SK-N-SH (cell line): ENCODE measurements at regions of chrX and their contacts with region 1.

Region 1: DNA sequence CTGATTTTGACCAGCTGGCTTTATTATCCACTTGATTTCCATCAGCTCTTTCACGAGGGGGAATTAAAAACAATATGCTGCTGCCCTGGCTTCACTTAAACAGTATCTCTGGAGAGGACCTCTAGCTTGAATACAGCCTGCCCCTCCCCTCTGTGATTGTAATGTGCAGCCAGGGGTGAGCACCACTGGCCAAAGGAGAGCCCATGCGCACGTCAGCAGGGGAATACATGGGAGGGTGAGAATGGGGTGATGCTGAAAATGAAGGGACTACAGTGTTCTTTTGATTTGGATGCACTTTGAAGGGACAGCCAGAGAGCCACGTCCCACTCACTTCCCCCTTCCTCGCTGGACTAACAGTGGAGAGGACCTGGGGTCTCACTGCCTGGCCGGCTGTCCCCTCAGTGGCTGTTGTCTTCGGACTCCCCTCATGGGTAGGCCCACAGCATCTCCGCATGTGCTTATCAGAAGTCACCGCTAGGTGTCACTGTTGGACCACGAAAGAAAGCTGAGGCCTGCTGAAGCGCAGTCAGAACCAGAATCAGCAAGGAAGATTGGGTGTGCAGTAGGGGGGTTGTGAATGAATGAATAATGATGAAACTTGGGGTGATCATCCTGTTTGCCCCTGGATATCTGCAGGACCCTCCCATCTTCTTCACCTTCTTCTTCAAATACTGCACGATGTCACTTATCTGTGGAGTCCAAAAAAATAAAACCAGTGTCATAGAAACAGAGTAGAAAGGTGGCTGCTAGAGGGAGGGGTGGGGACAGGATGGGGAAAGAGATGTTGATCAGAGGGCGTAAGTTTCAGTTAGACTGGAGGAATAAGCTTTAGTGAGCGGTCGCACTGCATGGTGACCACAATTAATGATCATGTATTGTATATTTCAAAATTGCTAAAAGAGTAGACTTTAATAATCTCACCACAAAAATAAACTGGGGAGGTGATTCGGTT is 32.8 kb downstream of the CLCN4 start:
- DNase-seq: peak; percentile 72
- H3K4me3 ChIP-seq: no peak overlapping the region
- H3K27ac ChIP-seq: no peak overlapping the region
- H3K4me1 ChIP-seq: no peaks in the 10 kb centered on the region; a peak in 1 of 4 replicates
- H3K27me3 ChIP-seq: peaks cover 21% of the 10 kb centered on the region; the same call in 1 of the 2 replicates
- CTCF ChIP-seq: peak; percentile 82
- EP300 ChIP-seq: no peak
- RAD21 ChIP-seq: peak; percentile 94

Region 2: DNA sequence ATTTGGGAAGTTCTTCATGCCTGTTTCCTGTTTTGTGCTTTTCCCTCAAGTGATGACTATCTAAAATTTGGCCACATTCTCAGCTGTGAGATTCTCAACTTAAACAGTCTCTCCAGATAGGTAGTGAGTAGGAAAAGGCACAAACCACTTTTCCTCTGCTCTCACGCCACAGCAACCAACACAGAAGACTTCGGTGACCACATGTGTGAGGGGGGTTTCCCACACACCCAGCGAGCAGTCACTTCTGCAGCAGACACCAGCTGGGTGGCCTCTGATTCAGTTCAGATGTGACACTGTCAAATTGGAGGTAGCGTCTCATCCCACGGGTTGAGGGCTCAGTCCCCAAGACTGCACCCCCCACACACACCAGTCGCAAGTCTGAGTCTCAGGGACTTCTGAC is 247.5 kb before region 1 on chrX:
- CTCF ChIA-PET with region 1: no interaction called
- POLR2A ChIA-PET with region 1: no interaction called
- DNase-seq: no peak
- H3K4me3 ChIP-seq: no peak overlapping the region
- H3K27ac ChIP-seq: no peak overlapping the region
- H3K4me1 ChIP-seq: no peaks in the 10 kb centered on the region
- H3K27me3 ChIP-seq: no peaks in the 10 kb centered on the region
- CTCF ChIP-seq: no peak
- EP300 ChIP-seq: no peak
- RAD21 ChIP-seq: no peak

Region 3: GRCh38 chrX:9980927-9981326 is 208.7 kb before region 1 on chrX:
- CTCF ChIA-PET with region 1: no interaction called
- POLR2A ChIA-PET with region 1: no interaction called
- DNase-seq: no peak
- H3K4me3 ChIP-seq: no peak overlapping the region
- H3K27ac ChIP-seq: no peak overlapping the region
- H3K4me1 ChIP-seq: no peaks in the 10 kb centered on the region
- H3K27me3 ChIP-seq: no peaks in the 10 kb centered on the region; the same call in 1 of the 2 replicates
- CTCF ChIP-seq: no peak
- EP300 ChIP-seq: no peak
- RAD21 ChIP-seq: no peak

Region 4: GRCh38 chrX:10039821-10040793 is 149.5 kb before region 1 on chrX:
- CTCF ChIA-PET with region 1: no interaction called
- POLR2A ChIA-PET with region 1: no interaction called
- DNase-seq: no peak
- H3K4me3 ChIP-seq: no peak overlapping the region
- H3K27ac ChIP-seq: no peak overlapping the region
- H3K4me1 ChIP-seq: no peaks in the 10 kb centered on the region
- H3K27me3 ChIP-seq: no peaks in the 10 kb centered on the region
- CTCF ChIP-seq: no peak
- EP300 ChIP-seq: no peak
- RAD21 ChIP-seq: no peak

Region 5: GRCh38 chrX:10158279-10159144 is 31.1 kb before region 1 on chrX:
- CTCF ChIA-PET with region 1: interaction called, 10 read pairs
- POLR2A ChIA-PET with region 1: no interaction called
- DNase-seq: peak; percentile 84
- H3K4me3 ChIP-seq: peak overlapping the region; percentile 51 to 57
- H3K27ac ChIP-seq: no peak overlapping the region
- H3K4me1 ChIP-seq: no peaks in the 10 kb centered on the region; a peak in 1 of 4 replicates
- H3K27me3 ChIP-seq: peaks cover 15% of the 10 kb centered on the region; the same call in 1 of the 2 replicates
- CTCF ChIP-seq: no peak
- EP300 ChIP-seq: no peak
- RAD21 ChIP-seq: no peak

Region 6: GRCh38 chrX:10206317-10206716 is 16.7 kb after region 1 on chrX:
- CTCF ChIA-PET with region 1: interaction called, 40 read pairs
- POLR2A ChIA-PET with region 1: no interaction called
- DNase-seq: no peak
- H3K4me3 ChIP-seq: no peak overlapping the region
- H3K27ac ChIP-seq: no peak overlapping the region
- H3K4me1 ChIP-seq: no peaks in the 10 kb centered on the region
- H3K27me3 ChIP-seq: no peaks in the 10 kb centered on the region; the same call in 1 of the 2 replicates
- CTCF ChIP-seq: no peak
- EP300 ChIP-seq: no peak
- RAD21 ChIP-seq: no peak

Region 7: DNA sequence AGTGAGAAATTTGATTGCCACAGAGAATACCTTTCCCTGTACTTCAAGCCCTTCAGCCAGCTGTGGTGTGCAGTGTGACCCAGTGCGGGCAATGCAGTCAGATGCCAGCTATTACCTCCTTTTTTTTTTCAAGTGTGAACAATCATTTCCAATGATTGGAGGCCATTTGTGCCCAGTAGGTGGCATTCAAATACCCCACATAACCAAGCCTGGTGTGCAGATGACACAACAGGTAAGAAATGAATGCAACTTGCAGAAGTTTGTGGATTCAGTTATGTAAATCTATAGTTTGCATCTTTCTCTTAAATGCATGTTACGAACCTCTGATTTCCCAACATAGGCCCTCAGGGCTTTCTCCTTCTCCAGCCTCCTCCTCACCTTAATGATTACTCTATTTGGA is 65.1 kb after region 1 on chrX:
- CTCF ChIA-PET with region 1: interaction called, 30 read pairs
- POLR2A ChIA-PET with region 1: no interaction called
- DNase-seq: peak; percentile 8
- H3K4me3 ChIP-seq: no peak overlapping the region
- H3K27ac ChIP-seq: no peak overlapping the region
- H3K4me1 ChIP-seq: no peaks in the 10 kb centered on the region
- H3K27me3 ChIP-seq: no peaks in the 10 kb centered on the region
- CTCF ChIP-seq: peak; percentile 30
- EP300 ChIP-seq: no peak
- RAD21 ChIP-seq: peak; percentile 69

Region 8: DNA sequence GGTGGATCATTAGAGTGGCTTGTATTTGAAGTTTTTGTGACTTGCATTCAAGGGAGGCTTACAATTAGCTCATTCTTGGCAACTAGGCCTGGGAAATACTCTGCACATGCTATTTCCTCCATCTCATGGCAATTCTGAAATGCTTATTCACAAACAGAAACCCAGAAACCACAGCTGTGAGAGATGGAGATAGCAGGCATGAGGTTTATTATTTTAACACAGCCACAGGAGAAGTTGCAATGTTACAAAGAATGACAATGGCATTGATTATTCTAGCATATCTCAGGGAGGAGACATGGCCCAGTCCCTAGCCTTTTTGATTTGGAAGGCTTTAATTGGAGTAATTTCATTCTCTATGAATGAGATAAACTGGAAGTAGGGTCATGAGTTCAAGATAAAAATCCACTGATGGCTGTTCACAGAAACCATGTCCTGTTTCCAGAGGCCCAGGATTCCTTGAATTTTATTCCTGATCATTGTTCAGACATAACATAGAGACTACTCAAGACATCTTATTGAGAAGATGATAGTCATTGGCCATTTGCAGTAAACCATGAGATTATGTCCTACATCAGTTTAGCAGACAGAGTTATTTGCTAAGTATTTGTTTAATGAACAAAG is 306.9 kb after region 1 on chrX:
- CTCF ChIA-PET with region 1: no interaction called
- POLR2A ChIA-PET with region 1: no interaction called
- DNase-seq: peak; percentile 46
- H3K4me3 ChIP-seq: no peak overlapping the region
- H3K27ac ChIP-seq: peak overlapping the region; percentile 76
- H3K4me1 ChIP-seq: no peaks in the 10 kb centered on the region; a peak in 2 of 4 replicates
- H3K27me3 ChIP-seq: no peaks in the 10 kb centered on the region
- CTCF ChIP-seq: no peak
- EP300 ChIP-seq: peak; percentile 32 to 81; a peak in 3 of 4 replicates
- RAD21 ChIP-seq: peak; percentile 8; the same call in 1 of the 2 replicates

Region 9: DNA sequence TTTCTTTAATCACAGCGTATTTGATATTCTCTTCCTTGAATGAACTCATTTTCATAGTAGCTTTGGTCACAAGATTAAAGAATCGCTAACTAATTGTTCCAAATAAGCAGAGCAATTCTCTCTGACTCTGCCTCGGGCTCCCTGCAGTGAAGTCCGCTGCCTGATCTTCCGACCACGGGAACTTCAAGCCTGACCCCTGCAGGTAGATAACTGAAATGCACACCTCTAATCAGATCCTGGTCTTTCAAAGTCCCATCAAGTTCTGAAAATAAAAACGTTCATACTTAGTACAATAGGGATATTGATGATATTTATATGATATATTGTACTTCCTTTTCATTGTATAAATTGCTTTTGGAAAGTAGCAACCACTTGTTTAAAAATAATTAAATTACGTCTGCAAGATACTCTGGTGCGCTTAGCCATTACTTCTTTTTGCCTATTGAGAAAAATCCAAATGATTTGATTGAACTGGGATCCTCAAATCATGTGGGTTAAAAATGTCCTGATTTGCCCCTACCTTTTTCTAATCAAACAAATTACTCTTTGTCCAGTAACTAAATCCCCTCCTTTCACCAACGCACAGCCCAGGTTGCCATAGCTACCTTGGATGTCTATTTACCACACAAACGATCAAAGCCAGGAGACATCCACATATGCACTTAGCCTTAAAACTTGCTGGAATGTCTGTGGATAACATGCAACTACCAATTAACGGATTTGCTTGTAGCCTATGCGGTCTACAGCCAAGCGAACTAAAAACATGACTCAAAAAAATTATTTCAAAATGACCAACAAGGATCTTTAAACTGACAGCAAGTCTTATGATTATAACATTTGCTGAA is 426.6 kb after region 1 on chrX:
- CTCF ChIA-PET with region 1: interaction called, 69 read pairs
- POLR2A ChIA-PET with region 1: no interaction called
- DNase-seq: peak; percentile 67
- H3K4me3 ChIP-seq: no peak overlapping the region; a peak in 1 of 4 replicates
- H3K27ac ChIP-seq: no peak overlapping the region
- H3K4me1 ChIP-seq: peaks cover 0 to 4% of the 10 kb centered on the region in 2 experiments; a peak in 3 of 4 replicates
- H3K27me3 ChIP-seq: peaks cover 13% of the 10 kb centered on the region; the same call in 1 of the 2 replicates
- CTCF ChIP-seq: peak; percentile 75
- EP300 ChIP-seq: no peak; a peak in 1 of 4 replicates
- RAD21 ChIP-seq: peak; percentile 77

Region 10: DNA sequence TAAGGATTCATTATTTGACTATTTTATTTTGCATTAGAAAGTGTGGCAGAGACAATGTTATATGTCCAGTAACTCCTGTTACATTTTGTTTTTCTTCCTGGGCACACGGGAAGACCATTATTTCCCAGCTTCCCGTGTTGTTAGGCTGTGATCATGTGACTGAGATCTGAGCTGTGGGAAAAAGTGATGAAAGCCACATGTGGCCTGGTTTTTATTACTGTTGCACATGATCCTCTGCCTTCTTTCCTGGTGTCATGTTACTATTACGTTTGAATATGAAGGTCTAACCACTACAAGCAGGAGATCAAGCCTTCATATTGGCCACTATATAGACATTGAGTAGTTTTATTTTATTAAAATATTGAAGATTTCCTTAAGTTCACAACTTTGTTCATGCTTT is 459.0 kb after region 1 on chrX:
- CTCF ChIA-PET with region 1: interaction called, 16 read pairs
- POLR2A ChIA-PET with region 1: no interaction called
- DNase-seq: peak; percentile 6
- H3K4me3 ChIP-seq: no peak overlapping the region
- H3K27ac ChIP-seq: no peak overlapping the region
- H3K4me1 ChIP-seq: no peaks in the 10 kb centered on the region
- H3K27me3 ChIP-seq: no peaks in the 10 kb centered on the region
- CTCF ChIP-seq: no peak
- EP300 ChIP-seq: no peak
- RAD21 ChIP-seq: no peak

Region 11: DNA sequence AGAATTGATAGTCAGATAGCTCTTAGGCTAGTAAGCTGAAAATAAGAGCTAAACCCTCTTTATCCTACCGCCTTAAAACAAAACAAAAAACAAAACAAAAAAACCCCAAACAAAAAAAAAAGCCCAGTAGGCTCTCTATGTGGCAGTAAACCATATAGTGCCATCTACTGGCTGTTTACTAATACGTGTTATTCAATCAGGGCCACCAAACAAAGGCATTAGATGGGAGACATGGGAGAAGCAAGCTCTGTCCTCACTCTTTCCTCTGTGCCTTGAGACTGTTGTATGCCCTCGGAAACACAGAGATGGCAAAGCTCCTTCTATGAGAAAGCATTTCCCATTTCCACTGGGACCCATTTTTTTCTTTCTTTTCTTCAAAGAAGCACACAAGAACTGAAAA is 579.6 kb after region 1 on chrX:
- CTCF ChIA-PET with region 1: interaction called, 12 read pairs
- POLR2A ChIA-PET with region 1: no interaction called
- DNase-seq: peak; percentile 36
- H3K4me3 ChIP-seq: no peak overlapping the region; a peak in 1 of 4 replicates
- H3K27ac ChIP-seq: no peak overlapping the region
- H3K4me1 ChIP-seq: no peaks in the 10 kb centered on the region; a peak in 2 of 4 replicates
- H3K27me3 ChIP-seq: no peaks in the 10 kb centered on the region
- CTCF ChIP-seq: peak; percentile 62
- EP300 ChIP-seq: no peak
- RAD21 ChIP-seq: peak; percentile 60